WTC11 (cell line): ENCODE measurements at regions of chr2 and their contacts with region 1.

Region 1: GRCh38 chr2:37877457-37878315 is 47.4 kb upstream of the RMDN2 start:
- DNase-seq: no peak
- ATAC-seq: peak; percentile 34
- H3K4me3 Mint-ChIP-seq: no peak overlapping the region
- H3K27ac Mint-ChIP-seq: no peak overlapping the region
- H3K4me1 Mint-ChIP-seq: peaks cover 34% of the 10 kb centered on the region
- H3K27me3 Mint-ChIP-seq: peaks cover 8% of the 10 kb centered on the region; the same call in 1 of the 2 replicates
- CTCF ChIP-seq: peak; percentile 64

Region 2: GRCh38 chr2:37344453-37345361 is 533.0 kb before region 1 on chr2 and contains the start of gene QPCT:
- CTCF ChIA-PET with region 1: interaction called, 17 read pairs
- POLR2A ChIA-PET with region 1: no interaction called
- DNase-seq: peak; percentile 34
- ATAC-seq: peak; percentile 30
- H3K4me3 Mint-ChIP-seq: peak within 1 kb of the TSS; percentile 78
- H3K27ac Mint-ChIP-seq: no peak within 1 kb of the TSS
- H3K4me1 Mint-ChIP-seq: peaks cover 54% of the 10 kb centered on the region
- H3K27me3 Mint-ChIP-seq: peaks cover 3% of the 10 kb centered on the region; the same call in 1 of the 2 replicates
- CTCF ChIP-seq: no peak
- total RNA-seq, gene QPCT: 13.6 to 19.9 TPM (median 19.5 TPM) in 3 replicates

Region 3: DNA sequence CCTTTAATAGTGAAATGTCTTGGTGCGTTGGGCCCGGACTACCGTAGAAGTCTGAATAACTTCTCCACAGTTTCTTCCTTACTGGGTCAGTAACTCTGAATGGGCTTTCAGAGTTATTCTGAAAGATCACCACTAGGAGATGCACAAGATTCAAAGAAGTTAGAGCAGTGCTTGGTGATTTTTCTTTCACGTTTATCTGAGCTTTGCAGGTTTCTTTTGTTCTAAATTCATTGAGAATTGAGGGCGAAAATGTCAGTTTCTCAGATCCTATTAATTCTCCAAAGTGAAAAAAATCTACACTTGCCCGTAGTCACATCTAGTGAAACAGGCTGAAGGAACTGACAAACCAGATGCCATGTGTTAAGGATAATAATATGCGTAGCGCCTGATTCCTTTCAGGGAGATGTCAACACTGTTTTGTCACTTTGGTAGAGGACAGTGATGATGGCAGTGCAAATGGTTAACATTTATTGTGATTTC is 463.2 kb before region 1 on chr2:
- CTCF ChIA-PET with region 1: interaction called, 111 read pairs
- POLR2A ChIA-PET with region 1: no interaction called
- DNase-seq: no peak
- ATAC-seq: peak; percentile 92
- H3K4me3 Mint-ChIP-seq: no peak overlapping the region
- H3K27ac Mint-ChIP-seq: no peak overlapping the region
- H3K4me1 Mint-ChIP-seq: peaks cover 13% of the 10 kb centered on the region
- H3K27me3 Mint-ChIP-seq: no peaks in the 10 kb centered on the region; the same call in 1 of the 2 replicates
- CTCF ChIP-seq: peak; percentile 45

Region 4: GRCh38 chr2:37459095-37459981 is 418.3 kb before region 1 on chr2:
- CTCF ChIA-PET with region 1: no interaction called
- POLR2A ChIA-PET with region 1: no interaction called
- DNase-seq: no peak
- ATAC-seq: no peak
- H3K4me3 Mint-ChIP-seq: no peak overlapping the region
- H3K27ac Mint-ChIP-seq: no peak overlapping the region
- H3K4me1 Mint-ChIP-seq: peaks cover 7% of the 10 kb centered on the region
- H3K27me3 Mint-ChIP-seq: no peaks in the 10 kb centered on the region
- CTCF ChIP-seq: no peak

Region 5: DNA sequence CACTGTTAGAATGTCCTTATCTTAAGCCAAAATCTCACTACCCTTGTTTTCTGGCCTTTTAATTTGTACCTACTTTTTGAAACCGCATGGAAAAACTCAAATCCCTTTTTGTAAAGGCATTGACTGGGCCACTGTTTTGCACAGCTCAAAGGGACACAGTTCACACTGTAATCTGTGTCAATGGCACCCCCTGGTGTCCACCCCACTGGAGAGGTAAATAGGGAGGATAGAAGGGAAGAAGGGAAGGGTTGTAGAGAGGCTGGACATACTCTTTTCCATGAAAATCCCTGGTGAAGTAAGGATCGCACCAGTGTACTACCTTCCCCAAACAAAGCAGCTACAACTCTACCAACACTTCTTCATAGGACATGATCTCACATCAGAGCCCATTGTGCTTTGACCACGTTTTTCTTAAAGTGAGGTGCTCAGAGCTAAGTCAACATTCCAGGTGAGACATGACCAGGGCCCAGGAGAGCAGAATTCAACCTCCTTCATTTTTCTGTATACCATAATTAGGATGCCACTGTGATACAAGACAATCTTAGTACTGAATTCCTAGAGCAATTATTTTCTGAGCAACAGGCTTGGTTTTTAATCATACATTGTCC is 45.0 kb before region 1 on chr2:
- CTCF ChIA-PET with region 1: interaction called, 20 read pairs
- POLR2A ChIA-PET with region 1: no interaction called
- DNase-seq: peak; percentile 88
- ATAC-seq: peak; percentile 98
- H3K4me3 Mint-ChIP-seq: no peak overlapping the region
- H3K27ac Mint-ChIP-seq: no peak overlapping the region
- H3K4me1 Mint-ChIP-seq: peaks cover 9% of the 10 kb centered on the region
- H3K27me3 Mint-ChIP-seq: no peaks in the 10 kb centered on the region
- CTCF ChIP-seq: peak; percentile 55

Region 6: DNA sequence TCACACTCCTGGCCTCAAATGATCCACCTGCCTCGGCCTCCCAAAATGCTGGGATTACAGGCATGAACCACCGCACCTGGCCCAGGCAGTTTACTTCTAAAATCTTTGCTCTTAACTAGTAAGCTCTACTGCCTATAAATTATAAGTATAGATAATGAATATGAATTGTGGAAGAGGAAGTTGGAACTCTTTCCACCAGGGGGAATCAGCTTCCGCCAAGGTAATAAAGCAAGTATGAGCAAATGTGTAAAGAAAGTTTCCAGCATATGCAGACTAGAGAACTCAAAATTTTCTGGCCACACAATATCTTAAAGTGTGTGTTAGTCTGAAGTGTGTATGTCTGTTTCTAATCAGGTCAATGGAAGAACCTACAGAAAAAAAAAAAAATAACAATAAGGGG is 115.5 kb after region 1 on chr2:
- CTCF ChIA-PET with region 1: no interaction called
- POLR2A ChIA-PET with region 1: no interaction called
- DNase-seq: no peak
- ATAC-seq: no peak
- H3K4me3 Mint-ChIP-seq: no peak overlapping the region
- H3K27ac Mint-ChIP-seq: no peak overlapping the region; the same call in 1 of the 2 replicates
- H3K4me1 Mint-ChIP-seq: peaks cover 16% of the 10 kb centered on the region
- H3K27me3 Mint-ChIP-seq: no peaks in the 10 kb centered on the region
- CTCF ChIP-seq: no peak

Region 7: GRCh38 chr2:38274286-38275276 is 396.9 kb after region 1 on chr2:
- CTCF ChIA-PET with region 1: interaction called, 10 read pairs
- POLR2A ChIA-PET with region 1: no interaction called
- DNase-seq: no peak
- ATAC-seq: peak; percentile 15; the same call in 1 of the 2 replicates
- H3K4me3 Mint-ChIP-seq: no peak overlapping the region
- H3K27ac Mint-ChIP-seq: no peak overlapping the region
- H3K4me1 Mint-ChIP-seq: peaks cover 53% of the 10 kb centered on the region
- H3K27me3 Mint-ChIP-seq: peaks cover 46% of the 10 kb centered on the region
- CTCF ChIP-seq: peak; percentile 31